CD14-positive monocyte (primary cell): ENCODE measurements at regions of chr17 and their contacts with region 1.

Region 1: DNA sequence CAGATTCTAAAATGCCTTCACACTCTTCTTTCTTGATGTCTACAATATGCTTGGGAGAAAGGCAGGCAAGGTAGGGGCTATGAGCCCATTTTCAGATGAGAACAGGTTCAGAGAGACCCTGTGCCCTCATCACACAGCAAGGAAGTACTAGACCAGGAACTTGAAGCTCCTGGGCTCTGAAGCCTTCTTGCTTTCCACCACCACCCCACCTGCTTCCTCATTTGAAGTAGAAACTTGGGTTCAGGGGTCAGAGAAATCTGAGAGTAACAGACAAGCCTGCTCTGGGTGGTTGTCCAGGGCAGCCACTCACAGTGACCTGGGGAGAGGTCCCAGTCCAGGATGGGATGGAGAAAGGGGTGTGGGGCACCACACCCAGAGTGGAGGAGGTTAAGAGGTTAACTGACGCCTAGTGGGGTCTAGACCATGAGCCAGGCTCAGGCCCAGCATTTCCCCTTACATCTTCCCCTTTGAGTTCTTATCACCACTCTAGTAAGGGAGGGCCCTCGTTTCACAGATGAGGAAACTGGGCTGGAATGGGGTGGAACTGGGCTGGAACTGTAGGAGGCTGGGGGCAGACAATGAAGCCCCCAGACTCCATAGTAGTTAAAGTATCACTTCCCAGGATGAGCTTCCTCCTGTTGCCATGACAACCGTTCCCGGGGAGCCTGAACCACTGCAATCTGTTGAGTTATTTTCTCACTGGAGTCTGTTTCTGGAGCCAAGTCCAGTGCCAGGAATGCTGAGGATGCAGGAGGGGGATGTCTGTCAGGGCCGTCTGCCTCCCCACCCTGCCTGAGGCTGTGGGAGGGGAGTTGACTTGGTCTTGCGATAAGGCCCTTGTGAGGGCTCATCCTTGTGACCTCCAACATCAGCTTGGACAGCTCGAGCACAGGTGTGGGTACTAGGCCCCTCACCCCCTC is 16.2 kb upstream of the PHF12 start:
- DNase-seq: peak; percentile 71 to 79 (median 76)
- H3K4me3 ChIP-seq: no peak overlapping the region
- H3K4me3 Mint-ChIP-seq: peak overlapping the region in 1 of 2 donors; percentile 57
- H3K27ac ChIP-seq: peak overlapping the region; percentile 81 to 84
- H3K27ac Mint-ChIP-seq: peak overlapping the region; percentile 94 to 99 (median 98)
- H3K4me1 ChIP-seq: peaks cover 19 to 26% of the 10 kb centered on the region in 2 donors
- H3K4me1 Mint-ChIP-seq: peaks cover 38% of the 10 kb centered on the region
- H3K27me3 ChIP-seq: no peaks in the 10 kb centered on the region
- H3K27me3 Mint-ChIP-seq: peaks cover 6 to 18% (median 15%) of the 10 kb centered on the region in 3 donors
- CTCF ChIP-seq: no peak

Region 2: GRCh38 chr17:29005936-29006511 is 38.5 kb after region 1 on chr17 and contains the start of gene SEZ6:
- intact Hi-C with region 1: loop called (anchors 5 kb)
- DNase-seq: peak; percentile 36 to 54 (median 45)
- H3K4me3 ChIP-seq: no peak within 1 kb of the TSS
- H3K4me3 Mint-ChIP-seq: peak within 1 kb of the TSS in 1 of 2 donors; percentile 85
- H3K27ac ChIP-seq: no peak within 1 kb of the TSS
- H3K27ac Mint-ChIP-seq: peak within 1 kb of the TSS in 2 of 7 donors; percentile 35 to 50
- H3K4me1 ChIP-seq: no peaks in the 10 kb centered on the region
- H3K4me1 Mint-ChIP-seq: no peaks in the 10 kb centered on the region
- H3K27me3 ChIP-seq: peaks cover 31 to 78% of the 10 kb centered on the region in 2 donors
- H3K27me3 Mint-ChIP-seq: peaks cover 66 to 77% (median 68%) of the 10 kb centered on the region in 3 donors
- CTCF ChIP-seq: no peak
- polyA plus RNA-seq, gene SEZ6: 0.17 to 0.33 (median 0.18) TPM

Region 3: DNA sequence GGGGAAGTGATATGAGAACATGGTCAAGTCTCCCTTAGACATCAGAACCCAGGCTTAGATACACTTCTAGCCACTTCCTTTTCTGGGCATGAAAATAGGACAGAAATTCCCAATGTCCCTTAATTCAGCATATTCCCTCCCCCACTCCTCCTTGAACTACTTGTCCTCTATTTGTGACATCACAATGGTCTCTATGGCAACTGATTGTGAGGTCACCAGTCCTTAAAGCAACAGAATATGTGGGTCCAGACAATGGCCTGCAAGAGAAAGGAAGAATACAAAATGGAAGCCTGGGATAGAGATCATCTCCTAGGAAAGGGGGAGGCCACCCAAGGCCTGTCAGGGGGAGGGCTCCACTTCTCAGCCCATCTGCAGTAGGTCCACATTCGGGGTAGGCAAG is 45.1 kb after region 1 on chr17:
- intact Hi-C with region 1: loop called (anchors 5 kb)
- DNase-seq: no peak
- H3K4me3 ChIP-seq: no peak overlapping the region
- H3K4me3 Mint-ChIP-seq: no peak overlapping the region
- H3K27ac ChIP-seq: no peak overlapping the region
- H3K27ac Mint-ChIP-seq: peak overlapping the region in 1 of 7 donors; percentile 26
- H3K4me1 ChIP-seq: no peaks in the 10 kb centered on the region
- H3K4me1 Mint-ChIP-seq: peaks cover 2% of the 10 kb centered on the region
- H3K27me3 ChIP-seq: peaks cover 11 to 32% of the 10 kb centered on the region in 2 donors
- H3K27me3 Mint-ChIP-seq: peaks cover 23 to 63% (median 25%) of the 10 kb centered on the region in 3 donors
- CTCF ChIP-seq: no peak

Region 4: GRCh38 chr17:29111816-29112499 is 144.5 kb after region 1 on chr17:
- intact Hi-C with region 1: loop called (anchors 1 to 2 kb)
- DNase-seq: peak; percentile 34 to 51 (median 48)
- H3K4me3 ChIP-seq: no peak overlapping the region
- H3K4me3 Mint-ChIP-seq: no peak overlapping the region
- H3K27ac ChIP-seq: peak overlapping the region in 1 of 2 donors; percentile 15
- H3K27ac Mint-ChIP-seq: peak overlapping the region in 2 of 7 donors; percentile 26 to 35
- H3K4me1 ChIP-seq: peaks cover 19 to 41% of the 10 kb centered on the region in 2 donors
- H3K4me1 Mint-ChIP-seq: peaks cover 33% of the 10 kb centered on the region
- H3K27me3 ChIP-seq: no peaks in the 10 kb centered on the region
- H3K27me3 Mint-ChIP-seq: no peaks in the 10 kb centered on the region
- CTCF ChIP-seq: peak; percentile 79

Region 5: DNA sequence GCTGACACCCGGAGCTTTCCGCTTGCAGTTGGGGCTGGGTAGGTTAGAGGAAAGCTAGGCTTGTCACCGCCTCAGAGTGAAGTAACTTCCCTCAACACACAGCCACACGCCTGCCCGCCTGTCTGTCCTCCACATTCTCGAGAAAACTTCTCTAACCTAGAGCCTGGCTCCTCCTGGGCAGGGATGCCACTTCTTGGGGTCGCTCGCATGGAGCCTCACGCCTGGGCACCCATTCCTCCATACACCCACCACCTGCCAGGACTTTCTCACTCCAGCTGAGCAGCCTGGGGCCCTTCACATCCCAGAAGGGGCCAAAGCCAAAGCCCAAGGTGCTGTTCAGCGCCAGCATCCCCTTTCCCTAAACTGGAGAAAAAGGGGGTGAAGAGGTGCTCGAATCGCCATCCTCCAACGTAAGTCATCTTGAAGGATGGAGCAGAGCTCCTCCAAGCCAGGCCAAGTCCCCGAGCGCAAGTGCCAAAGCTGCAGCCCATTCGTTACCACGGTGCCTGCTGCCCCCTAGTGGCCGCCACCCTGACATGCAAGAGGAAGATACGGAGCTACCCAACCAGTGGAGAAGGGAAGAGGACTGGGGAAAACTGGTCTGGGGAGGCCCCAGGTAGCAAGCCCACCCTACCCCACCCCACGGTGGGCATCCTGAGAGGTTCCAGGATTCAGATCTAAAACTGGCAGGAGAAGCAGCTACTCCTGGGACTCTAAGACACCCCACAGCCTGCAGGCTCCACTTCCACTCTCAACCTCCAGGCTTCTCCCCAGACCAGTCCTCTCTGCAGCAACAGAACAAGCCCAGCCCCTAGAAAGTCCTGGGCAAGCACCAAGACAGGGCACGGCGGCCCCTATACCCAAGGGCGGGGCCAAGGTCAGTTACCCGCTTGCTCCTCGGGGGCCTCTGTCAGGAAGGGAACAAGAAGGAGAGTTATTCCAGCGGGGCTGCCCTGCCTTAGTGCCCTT is 149.6 kb after region 1 on chr17:
- intact Hi-C with region 1: loop called (anchors 1 to 2 kb)
- DNase-seq: peak; percentile 66 to 77 (median 66)
- H3K4me3 ChIP-seq: peak overlapping the region in 1 of 3 experiments; percentile 36
- H3K4me3 Mint-ChIP-seq: peak overlapping the region; percentile 24 to 62
- H3K27ac ChIP-seq: peak overlapping the region; percentile 39 to 67
- H3K27ac Mint-ChIP-seq: peak overlapping the region; percentile 54 to 89 (median 84)
- H3K4me1 ChIP-seq: peaks cover 27 to 33% of the 10 kb centered on the region in 2 donors
- H3K4me1 Mint-ChIP-seq: peaks cover 26% of the 10 kb centered on the region
- H3K27me3 ChIP-seq: no peaks in the 10 kb centered on the region
- H3K27me3 Mint-ChIP-seq: no peaks in the 10 kb centered on the region
- CTCF ChIP-seq: peak; percentile 99

Region 6: GRCh38 chr17:29195465-29196081 is 228.1 kb after region 1 on chr17:
- intact Hi-C with region 1: no loop called
- DNase-seq: peak; percentile 85 to 92 (median 92)
- H3K4me3 ChIP-seq: peak overlapping the region in 2 of 3 experiments; percentile 21 to 55
- H3K4me3 Mint-ChIP-seq: peak overlapping the region; percentile 40 to 61
- H3K27ac ChIP-seq: peak overlapping the region; percentile 87 to 89
- H3K27ac Mint-ChIP-seq: peak overlapping the region; percentile 95 to 99 (median 98)
- H3K4me1 ChIP-seq: peaks cover 57 to 59% of the 10 kb centered on the region in 2 donors
- H3K4me1 Mint-ChIP-seq: peaks cover 61% of the 10 kb centered on the region
- H3K27me3 ChIP-seq: no peaks in the 10 kb centered on the region
- H3K27me3 Mint-ChIP-seq: peaks cover 0 to 5% (median 4%) of the 10 kb centered on the region in 3 donors
- CTCF ChIP-seq: no peak